ENCODE measurements at regions of chr14 and their contacts with region 1.

Region 1: GRCh38 chr14:61321385-61322010 is at the start of gene PRKCH:
- DNase-seq: peak; percentile 94
- H3K4me3 Mint-ChIP-seq: peak within 1 kb of the TSS; percentile 87
- H3K27ac Mint-ChIP-seq: peak within 1 kb of the TSS; percentile 89
- H3K4me1 Mint-ChIP-seq: peaks cover 27% of the 10 kb centered on the region
- H3K27me3 Mint-ChIP-seq: no peaks in the 10 kb centered on the region

Region 2: DNA sequence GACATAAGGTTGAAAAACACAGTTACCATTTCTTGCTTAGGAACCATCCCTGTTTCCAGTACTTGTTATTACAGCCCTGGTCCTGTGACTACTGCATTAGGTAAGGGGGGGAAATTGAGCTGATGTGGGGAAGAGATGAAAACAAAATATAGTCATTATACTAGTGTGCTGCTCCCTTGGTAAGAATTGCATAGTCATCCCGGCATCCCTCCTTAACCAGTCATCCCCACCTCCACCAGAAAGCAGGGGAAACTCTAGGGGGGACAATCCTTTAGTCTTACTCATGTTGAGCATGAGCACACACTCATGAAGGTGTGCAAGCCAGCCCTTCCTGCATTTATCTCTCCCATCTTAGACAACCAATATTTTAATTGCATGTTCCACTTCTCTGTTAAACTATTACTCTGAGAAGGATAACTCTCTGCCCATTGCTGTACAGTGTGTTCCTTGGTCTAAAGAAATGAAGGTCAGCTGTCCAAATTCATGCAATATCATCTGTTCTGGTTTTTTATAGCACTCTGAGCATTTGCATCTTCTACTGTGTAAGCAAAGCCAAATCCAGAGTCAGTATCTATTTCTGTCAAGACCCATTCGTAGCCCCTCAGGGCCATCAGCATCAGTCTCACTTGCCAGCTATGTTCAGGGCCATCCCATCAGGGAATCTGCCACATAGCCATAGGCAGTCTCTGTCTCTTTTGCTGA is 87.1 kb before region 1 on chr14:
- CTCF ChIA-PET with region 1: no interaction called
- DNase-seq: no peak
- H3K4me3 Mint-ChIP-seq: no peak overlapping the region
- H3K27ac Mint-ChIP-seq: no peak overlapping the region
- H3K4me1 Mint-ChIP-seq: no peaks in the 10 kb centered on the region
- H3K27me3 Mint-ChIP-seq: peaks cover 20% of the 10 kb centered on the region

Region 3: DNA sequence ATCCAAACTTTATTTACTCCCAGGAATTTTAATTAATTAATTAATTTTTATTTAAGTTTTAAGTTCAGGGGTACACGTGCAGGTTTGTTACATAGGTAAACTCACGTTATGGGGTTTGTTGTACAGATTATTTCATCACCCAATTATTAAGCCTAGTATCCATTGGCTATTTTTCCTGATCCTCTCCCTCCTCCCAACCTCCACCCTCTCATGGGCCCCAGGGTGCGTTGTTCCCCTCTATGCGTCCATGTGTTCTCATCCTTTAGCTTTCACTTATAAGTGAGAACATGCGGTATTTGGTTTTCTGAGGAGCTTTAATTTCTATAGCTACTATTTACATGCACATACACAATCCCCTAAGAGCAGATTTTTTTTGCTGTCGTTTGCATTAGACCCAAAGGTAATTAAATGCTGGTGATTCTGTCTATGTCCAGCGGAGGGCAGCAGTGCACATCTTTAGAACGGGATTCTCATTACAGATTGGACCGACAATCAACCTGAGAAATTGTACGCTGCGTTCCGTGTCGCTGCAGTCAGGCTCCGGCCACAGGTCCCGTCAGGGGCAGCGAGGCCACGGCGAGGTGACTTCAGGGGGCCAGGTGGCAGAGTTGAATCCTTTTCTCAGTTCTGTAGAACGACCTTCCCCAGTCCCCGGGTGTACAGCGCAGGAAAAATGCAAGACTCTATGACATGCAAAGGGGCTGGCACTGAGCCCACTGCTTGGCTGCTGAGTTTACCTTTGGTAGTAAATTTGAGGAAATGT is 52.0 kb before region 1 on chr14:
- CTCF ChIA-PET with region 1: no interaction called
- DNase-seq: peak; percentile 86
- H3K4me3 Mint-ChIP-seq: peak overlapping the region; percentile 34
- H3K27ac Mint-ChIP-seq: no peak overlapping the region
- H3K4me1 Mint-ChIP-seq: peaks cover 8% of the 10 kb centered on the region
- H3K27me3 Mint-ChIP-seq: peaks cover 62% of the 10 kb centered on the region

Region 4: GRCh38 chr14:61334197-61334701 is 12.8 kb after region 1 on chr14:
- CTCF ChIA-PET with region 1: interaction called, 14 read pairs
- DNase-seq: peak; percentile 50
- H3K4me3 Mint-ChIP-seq: peak overlapping the region; percentile 67
- H3K27ac Mint-ChIP-seq: peak overlapping the region; percentile 93
- H3K4me1 Mint-ChIP-seq: peaks cover 92% of the 10 kb centered on the region
- H3K27me3 Mint-ChIP-seq: no peaks in the 10 kb centered on the region

Measured in activated naive CD4-positive, alpha-beta T cell treated with anti-CD3 and anti-CD28 coated beads, Interleukin-2, amount 10 ng/mL, durations not matched to agents 7 days and 5 days (primary cell).